Activated CD4-positive, alpha-beta memory T cell treated with anti-CD3 and anti-CD28 coated beads for 36 hours (primary cell): ENCODE measurements at regions of chr17 and their contacts with region 1.

Region 1: GRCh38 chr17:81860756-81861518 is 602 bp upstream of the P4HB start:
- DNase-seq: peak; percentile 100
- H3K4me3 Mint-ChIP-seq: peak overlapping the region; percentile 95
- H3K27ac Mint-ChIP-seq: peak overlapping the region; percentile 96
- H3K4me1 Mint-ChIP-seq: peaks cover 48% of the 10 kb centered on the region
- H3K27me3 Mint-ChIP-seq: no peaks in the 10 kb centered on the region

Region 2: DNA sequence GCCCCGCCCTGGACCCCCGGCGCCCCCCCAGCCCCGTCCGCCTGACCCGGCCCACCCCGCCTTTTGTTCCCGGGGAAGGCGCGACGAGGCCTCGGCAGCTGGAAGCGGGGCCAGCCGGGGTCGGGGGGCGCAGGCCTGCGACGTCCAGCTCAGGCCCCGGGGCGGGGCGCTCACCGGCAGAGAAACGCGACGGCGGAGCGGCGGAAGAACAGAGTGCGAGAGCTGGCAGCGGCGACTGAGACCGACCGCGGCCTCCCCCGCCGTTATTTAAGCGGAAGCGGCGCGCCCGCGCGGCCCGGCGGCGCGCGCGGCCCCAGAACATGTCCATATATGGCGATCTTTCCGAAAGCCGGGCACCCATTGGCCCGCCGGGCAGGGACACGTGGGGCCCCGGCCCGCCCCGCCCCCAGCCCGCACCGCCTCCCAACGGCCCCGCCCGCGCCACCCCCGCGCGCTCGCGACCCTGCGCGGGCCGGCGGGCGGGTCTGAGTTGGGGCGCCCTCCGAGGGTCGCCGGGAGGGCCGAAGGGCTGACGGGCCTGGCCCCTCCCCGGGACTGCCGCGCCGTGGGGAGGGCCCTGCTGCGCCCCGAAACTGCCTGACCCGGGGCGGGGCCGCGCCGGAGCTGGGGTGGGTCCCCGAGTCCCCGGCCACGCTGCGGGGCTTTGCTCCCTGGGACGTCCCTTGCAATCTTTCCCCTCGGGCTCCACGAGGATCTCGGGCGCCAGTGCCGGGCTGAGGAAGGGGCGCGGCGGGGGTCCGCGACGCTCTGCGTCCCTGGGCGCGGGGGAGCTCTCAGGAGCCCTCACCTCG is 348.2 kb before region 1 on chr17 and contains the start of gene ACTG1:
- CTCF ChIA-PET with region 1: no interaction called
- POLR2A ChIA-PET with region 1: no interaction called
- intact Hi-C with region 1: loop called (anchors 2 kb)
- DNase-seq: peak; percentile 93
- H3K4me3 Mint-ChIP-seq: peak within 1 kb of the TSS; percentile 89
- H3K27ac Mint-ChIP-seq: peak within 1 kb of the TSS; percentile 92
- H3K4me1 Mint-ChIP-seq: peaks cover 30% of the 10 kb centered on the region
- H3K27me3 Mint-ChIP-seq: no peaks in the 10 kb centered on the region
- total RNA-seq, gene ACTG1: 3,773 to 3,928 TPM

Region 3: GRCh38 chr17:81683584-81684237 is 177.2 kb before region 1 on chr17 and contains the starts of genes ARL16 and HGS:
- CTCF ChIA-PET with region 1: no interaction called
- POLR2A ChIA-PET with region 1: interaction called, 3 read pairs
- intact Hi-C with region 1: loop called (anchors 1 kb)
- DNase-seq: peak; percentile 99
- H3K4me3 Mint-ChIP-seq: peak within 1 kb of the TSS; percentile 86
- H3K27ac Mint-ChIP-seq: peak within 1 kb of the TSS; percentile 86
- H3K4me1 Mint-ChIP-seq: peaks cover 32% of the 10 kb centered on the region
- H3K27me3 Mint-ChIP-seq: peaks cover 2% of the 10 kb centered on the region
- total RNA-seq, gene ARL16: 15.1 to 17.1 TPM
- total RNA-seq, gene HGS: 96.9 to 111 TPM

Region 4: DNA sequence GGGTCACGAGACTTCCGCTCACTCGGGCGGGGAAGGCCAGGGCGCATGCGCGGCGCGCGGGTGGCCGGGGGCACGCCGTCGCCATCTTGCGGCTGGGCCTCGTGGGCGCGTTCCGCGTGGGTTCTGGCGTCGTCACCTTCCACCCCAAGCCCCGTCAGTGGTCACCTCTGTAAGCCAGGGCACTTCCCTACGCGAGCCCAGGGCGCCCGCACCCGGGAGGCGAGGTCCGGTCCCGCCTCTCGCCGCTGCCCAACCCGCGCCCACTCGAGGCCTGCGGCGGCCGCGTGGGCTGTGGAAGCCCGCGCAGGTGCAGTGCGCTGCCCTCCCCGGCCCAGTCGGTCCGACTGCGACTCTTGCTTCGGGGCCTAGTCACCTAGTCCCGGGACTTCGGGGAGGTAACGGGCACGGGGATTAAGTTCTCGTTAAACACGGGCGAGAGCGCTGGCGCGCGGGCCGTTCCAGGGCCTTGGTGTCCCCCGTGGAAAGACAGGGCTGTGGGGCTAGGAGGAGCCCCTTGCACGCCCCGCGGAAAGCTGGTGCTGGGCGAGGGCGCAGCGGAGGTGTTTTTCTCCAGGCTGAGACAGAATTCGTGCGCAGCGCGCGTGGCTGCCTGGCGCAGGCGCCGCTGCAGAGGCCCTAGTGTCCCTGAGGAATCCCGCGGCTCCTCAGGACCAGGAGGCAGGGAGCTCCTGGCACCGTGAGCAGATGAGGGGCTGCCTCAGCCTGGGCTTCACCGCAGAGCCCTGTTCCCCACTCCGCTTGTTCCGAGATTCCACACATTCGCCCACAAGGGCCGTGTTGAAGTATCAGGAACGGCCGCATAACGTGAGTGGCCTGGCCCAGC is 10.7 kb after region 1 on chr17:
- CTCF ChIA-PET with region 1: interaction called, 8 read pairs
- POLR2A ChIA-PET with region 1: interaction called, 21 read pairs
- intact Hi-C with region 1: loop called (anchors 1 kb)
- DNase-seq: peak; percentile 96
- H3K4me3 Mint-ChIP-seq: peak overlapping the region; percentile 85
- H3K27ac Mint-ChIP-seq: peak overlapping the region; percentile 94
- H3K4me1 Mint-ChIP-seq: peaks cover 45% of the 10 kb centered on the region
- H3K27me3 Mint-ChIP-seq: no peaks in the 10 kb centered on the region

Region 5: DNA sequence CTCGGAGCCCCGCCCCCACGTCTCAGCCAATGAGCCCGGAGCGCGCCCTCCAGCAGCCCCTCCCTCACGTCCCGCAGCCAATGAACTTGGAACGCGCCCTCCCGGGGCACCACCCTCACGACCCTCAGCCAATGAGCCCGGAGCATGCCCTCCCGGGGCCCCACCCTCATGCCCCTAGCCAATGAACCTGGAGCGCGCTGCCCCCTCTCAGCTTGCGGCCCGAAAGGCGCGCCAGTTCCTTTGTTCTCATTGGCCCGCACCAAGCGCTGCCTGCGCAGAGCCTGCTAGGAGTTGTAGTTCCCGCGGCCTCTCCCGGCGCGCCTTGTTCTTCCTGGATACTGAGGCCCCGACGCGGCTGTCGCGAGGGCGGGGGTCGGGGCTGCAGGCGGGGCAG is 162.0 kb after region 1 on chr17 and contains the start of gene LRRC45:
- CTCF ChIA-PET with region 1: interaction called, 3 read pairs
- POLR2A ChIA-PET with region 1: interaction called, 3 read pairs
- intact Hi-C with region 1: loop called (anchors 2 kb)
- DNase-seq: peak; percentile 100
- H3K4me3 Mint-ChIP-seq: peak within 1 kb of the TSS; percentile 84
- H3K27ac Mint-ChIP-seq: peak within 1 kb of the TSS; percentile 66
- H3K4me1 Mint-ChIP-seq: peaks cover 24% of the 10 kb centered on the region
- H3K27me3 Mint-ChIP-seq: no peaks in the 10 kb centered on the region
- total RNA-seq, gene LRRC45: 16.3 to 19.0 TPM